Dorsolateral prefrontal cortex (tissue), 120 donors: ENCODE measurements at regions of chr2 and their contacts with region 1.

Region 1: GRCh38 chr2:191051825-191052778 is 38.1 kb upstream of the STAT1 start:
- DNase-seq: no peak
- H3K4me3 ChIP-seq: peak overlapping the region in 1 of 59 donors; percentile 14
- H3K27ac ChIP-seq: peak overlapping the region in 8 of 59 donors; percentile 0 to 56 (median 20)
- H3K27me3 ChIP-seq: peaks cover 0 to 4% (median 0%) of the 10 kb centered on the region in 45 donors
- CTCF ChIP-seq: peak; percentile 44 to 78 (median 60)

Region 2: GRCh38 chr2:190887089-190887488 is 165.0 kb before region 1 on chr2:
- intact Hi-C with region 1: no loop called
- DNase-seq: no peak
- H3K4me3 ChIP-seq: peak overlapping the region in 18 of 59 donors; percentile 1 to 98 (median 18)
- H3K27ac ChIP-seq: peak overlapping the region in 2 of 59 donors; percentile 5 to 17
- H3K27me3 ChIP-seq: no peaks in the 10 kb centered on the region
- CTCF ChIP-seq: no peak

Region 3: GRCh38 chr2:191150600-191151330 is 98.7 kb after region 1 on chr2 and contains the start of gene STAT4:
- intact Hi-C with region 1: loop called (anchors 5 kb)
- DNase-seq: peak in 8 of 10 donors; percentile 20 to 61 (median 50)
- H3K4me3 ChIP-seq: peak within 1 kb of the TSS; percentile 38 to 77 (median 63)
- H3K27ac ChIP-seq: peak within 1 kb of the TSS in 52 of 59 donors; percentile 1 to 86 (median 69)
- H3K27me3 ChIP-seq: peaks cover 0 to 22% (median 0%) of the 10 kb centered on the region in 45 donors
- CTCF ChIP-seq: no peak
- total RNA-seq, gene STAT4: 8.5 to 69.1 (median 36.3) TPM

Region 4: DNA sequence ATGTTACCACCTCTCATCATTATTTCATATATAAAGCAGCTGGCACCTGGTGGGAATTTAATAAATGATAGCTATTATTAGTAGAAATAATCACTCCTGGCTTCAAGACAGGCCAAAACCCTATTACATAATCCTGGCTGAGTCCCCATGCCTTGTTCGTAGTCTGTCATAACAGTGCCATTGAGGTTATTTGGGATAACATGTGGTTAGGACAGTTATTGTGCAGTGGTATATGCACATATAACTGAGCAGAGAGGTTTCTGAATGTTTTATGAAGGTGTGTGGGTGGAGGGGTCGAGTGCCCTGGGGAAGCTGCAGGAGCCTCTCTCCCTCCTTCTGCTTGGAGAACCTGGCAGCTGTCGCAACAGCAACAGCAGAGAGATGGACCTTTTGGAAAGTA is 463.4 kb after region 1 on chr2:
- intact Hi-C with region 1: loop called (anchors 5 to 10 kb)
- DNase-seq: no peak
- H3K4me3 ChIP-seq: no peak overlapping the region
- H3K27ac ChIP-seq: no peak overlapping the region
- H3K27me3 ChIP-seq: peaks cover 0 to 3% (median 0%) of the 10 kb centered on the region in 45 donors
- CTCF ChIP-seq: no peak

Region 5: DNA sequence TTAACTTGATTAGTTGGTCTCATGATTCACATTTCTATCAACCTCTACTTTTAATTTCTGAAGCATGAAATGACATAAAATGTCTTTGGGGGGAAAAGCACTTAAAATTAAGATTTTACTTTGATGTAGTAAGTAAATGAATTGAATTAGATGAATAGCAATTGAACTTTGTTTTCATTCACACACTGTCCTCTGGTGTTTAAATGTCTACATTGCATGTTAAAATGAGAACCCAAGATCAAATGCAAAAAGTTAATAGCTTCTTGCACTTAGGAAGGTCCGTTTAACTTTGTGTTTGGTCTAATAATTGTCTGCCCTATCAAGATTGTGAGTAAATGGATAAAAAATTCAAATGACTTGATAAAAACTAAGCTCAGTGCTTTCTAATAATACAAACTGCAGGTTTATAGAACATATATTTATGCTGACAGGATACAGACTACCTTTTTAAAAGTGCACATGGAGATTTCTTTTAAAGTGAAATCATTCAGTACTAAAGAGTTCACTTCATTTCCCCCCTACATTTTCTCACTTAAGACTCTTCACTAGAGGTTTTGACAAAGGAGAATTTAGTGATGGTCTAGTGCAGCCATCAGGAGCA is 469.6 kb after region 1 on chr2:
- intact Hi-C with region 1: loop called (anchors 5 to 10 kb)
- DNase-seq: no peak
- H3K4me3 ChIP-seq: no peak overlapping the region
- H3K27ac ChIP-seq: no peak overlapping the region
- H3K27me3 ChIP-seq: peaks cover 0 to 3% (median 0%) of the 10 kb centered on the region in 45 donors
- CTCF ChIP-seq: peak; percentile 48 to 92 (median 81)